GM10248 (cell line): ENCODE measurements at regions of chr3 and their contacts with region 1.

Region 1: DNA sequence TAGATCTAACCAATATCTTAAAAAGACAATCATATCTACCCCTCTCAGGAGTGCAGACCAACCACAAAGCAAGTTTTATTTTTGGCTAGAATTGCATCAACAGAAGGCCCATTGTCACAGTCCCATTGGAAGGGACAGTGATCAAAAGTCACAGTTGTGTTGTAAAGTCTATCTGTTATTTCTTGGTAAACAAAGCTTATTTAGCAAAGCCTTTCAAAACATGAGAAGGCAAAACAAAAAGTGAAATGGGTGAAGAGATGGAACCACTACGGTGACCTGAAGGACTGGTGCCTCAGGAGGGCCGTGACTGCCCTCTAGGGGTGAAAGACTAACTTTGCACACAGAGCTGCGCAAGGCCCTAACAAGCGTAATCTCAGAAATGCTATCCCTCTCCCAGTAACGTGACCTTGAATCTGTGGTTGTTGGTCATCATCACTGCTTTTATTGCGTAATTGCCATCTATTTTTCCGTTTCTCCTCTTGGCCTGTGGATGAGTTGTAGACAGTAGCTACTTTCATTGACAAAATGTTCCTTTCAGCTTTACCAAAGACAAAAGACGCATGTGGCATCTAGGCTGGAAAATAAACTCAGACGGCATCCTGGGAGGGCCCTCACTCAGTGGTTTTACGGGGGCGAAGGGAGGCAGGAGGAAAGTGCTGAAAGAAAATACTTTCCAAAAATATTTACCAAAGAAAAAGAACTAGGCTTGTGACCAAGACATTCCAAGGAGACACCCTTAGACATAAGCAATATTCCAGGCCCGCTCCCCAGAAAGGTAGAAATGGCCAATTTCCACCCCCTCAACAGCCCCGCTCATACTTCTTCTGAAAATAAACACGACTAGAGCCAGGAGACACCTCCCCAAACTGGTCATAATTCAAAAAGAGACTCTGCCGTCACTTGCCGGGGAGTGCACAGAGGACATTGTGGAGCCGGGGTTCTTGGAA is 79.4 kb downstream of the FRMD4B start:
- DNase-seq: peak; percentile 68
- CTCF ChIP-seq: peak; percentile 93

Region 2: DNA sequence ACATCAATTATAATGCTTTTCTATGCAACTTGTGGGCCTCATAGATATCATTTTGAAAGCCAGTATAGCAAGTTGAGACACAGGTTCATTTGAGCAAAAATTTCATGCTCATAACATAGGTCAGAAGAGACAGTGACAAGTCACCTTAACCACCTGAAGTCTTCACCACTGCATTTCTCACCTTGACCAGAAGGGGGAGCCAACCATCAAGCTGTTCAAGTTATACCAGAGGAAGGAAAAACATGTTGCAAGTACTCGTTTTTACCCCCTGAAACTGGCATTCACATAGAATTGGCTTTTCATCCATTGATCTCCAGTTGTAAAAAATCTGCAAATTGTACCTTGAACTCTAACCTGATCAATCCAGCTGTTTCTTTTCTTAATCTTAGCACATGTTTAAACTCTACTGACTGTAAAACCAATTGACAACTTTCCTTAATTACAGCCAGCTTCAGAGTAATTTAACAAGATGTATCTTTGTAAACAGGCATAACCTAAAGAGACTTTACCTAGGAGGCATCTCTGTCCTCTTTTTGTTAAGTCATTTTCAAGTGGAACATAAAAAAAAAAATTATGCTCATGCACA is 185.5 kb before region 1 on chr3:
- CTCF ChIA-PET with region 1: interaction called, 53 read pairs
- POLR2A ChIA-PET with region 1: no interaction called
- DNase-seq: peak; percentile 46
- CTCF ChIP-seq: peak; percentile 95

Region 3: GRCh38 chr3:69241769-69242168 is 64.7 kb before region 1 on chr3:
- CTCF ChIA-PET with region 1: interaction called, 12 read pairs
- POLR2A ChIA-PET with region 1: no interaction called
- DNase-seq: no peak
- CTCF ChIP-seq: no peak

Region 4: GRCh38 chr3:69294014-69294775 is 12.3 kb before region 1 on chr3:
- CTCF ChIA-PET with region 1: interaction called, 37 read pairs
- POLR2A ChIA-PET with region 1: no interaction called
- DNase-seq: peak; percentile 20
- CTCF ChIP-seq: no peak

Region 5: DNA sequence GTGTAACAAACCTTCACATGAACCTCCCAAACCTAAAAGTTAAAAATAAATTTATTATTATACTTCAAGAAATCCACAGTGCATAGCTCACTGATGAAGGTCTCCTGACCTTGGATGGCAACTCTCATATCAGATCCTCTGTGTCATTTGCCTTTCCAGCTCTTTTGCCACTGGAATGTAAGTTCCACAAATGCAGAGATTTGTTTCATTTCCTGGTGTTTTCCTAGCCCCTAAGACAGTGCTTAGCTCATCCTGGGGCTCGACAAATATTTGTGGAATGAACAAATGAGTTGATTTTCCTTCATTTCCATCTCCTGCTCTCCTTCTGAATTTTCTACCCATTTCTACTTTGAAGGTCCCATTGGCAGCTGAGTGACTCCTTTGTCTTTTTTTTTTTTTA is 23.4 kb after region 1 on chr3:
- CTCF ChIA-PET with region 1: interaction called, 15 read pairs
- POLR2A ChIA-PET with region 1: no interaction called
- DNase-seq: no peak
- CTCF ChIP-seq: no peak

Region 6: DNA sequence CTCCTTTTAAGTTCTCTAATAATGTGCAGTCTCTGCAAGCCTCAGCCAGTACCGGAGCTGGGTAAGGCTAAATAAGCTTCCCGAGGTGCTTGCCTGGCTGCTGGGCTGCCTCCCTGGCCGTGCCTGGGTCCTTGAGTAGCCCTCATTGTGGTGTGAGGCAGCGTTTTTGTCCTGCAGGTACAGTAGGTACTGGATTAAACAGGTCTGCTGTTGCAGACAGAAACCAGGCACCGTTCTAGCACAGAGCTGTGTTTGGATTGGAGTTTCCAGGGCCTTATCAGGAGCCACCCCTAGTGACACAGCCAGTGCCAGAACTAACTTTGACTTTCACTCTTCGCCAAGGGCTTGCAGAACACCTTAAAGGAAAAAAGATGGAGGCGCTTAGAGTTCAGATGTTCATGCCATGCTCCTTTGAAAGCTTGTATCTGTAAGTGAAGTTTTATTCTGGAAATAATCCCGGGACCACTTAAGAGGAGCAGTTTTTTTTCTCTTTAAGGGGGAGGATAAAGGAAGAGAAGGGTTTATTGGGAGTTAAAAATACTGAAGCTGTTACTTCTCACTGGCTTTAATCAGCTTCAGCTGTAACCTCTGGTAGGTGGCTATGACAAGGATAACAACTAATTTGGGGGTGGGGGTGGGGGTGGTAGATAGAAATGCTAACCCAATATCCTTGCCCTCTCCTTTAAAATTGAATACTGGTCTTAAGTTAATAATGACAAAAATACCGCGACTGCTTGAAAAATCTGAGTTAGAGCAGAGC is 559.6 kb after region 1 on chr3:
- CTCF ChIA-PET with region 1: no interaction called
- POLR2A ChIA-PET with region 1: no interaction called
- DNase-seq: no peak
- CTCF ChIP-seq: no peak